ENCODE measurements at regions of chr1 and their contacts with region 1.

Region 1: DNA sequence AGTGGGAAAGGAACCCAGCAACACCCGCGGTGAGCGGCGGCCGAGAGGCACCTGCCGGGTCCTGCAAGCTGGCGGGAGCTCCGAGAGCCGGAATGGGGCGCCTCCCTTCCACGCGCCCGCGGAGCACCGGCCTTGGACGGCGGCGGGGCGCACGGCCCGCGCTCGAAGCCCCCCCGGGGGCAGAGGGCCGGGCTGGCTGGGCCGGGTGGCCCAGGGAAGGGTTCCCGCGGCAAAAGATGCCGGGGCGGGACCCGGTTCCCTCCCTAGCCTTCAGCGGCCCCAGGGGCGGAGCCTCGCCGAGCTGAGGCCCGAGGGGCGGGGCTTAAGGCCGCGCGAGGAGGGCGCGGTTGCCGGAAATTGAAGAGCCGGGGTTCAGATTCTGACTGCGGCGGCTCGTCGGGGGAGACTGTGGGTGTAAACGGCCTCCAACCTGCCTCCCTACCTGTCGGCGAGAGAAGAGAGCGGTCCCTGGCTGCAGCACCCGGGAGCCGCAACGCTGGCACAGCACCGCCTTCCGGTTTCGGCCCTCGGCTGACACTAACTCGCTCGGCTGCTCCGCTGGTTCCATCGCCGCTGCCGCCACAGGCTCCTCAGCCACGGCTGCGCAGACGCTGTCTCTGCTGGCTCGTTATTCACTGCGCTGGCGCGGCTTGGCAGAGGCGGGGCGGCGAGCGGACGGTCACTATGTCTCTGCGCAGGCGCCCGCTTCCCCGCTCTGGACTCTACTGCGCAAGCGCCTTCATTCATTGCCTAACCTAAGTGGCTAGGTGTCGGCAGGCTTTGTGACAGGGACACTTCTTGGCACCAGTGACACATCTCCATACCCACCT is at the start of gene RABIF:
- H3K4me3 Mint-ChIP-seq: peak within 1 kb of the TSS; percentile 77
- H3K27ac Mint-ChIP-seq: peak within 1 kb of the TSS; percentile 93
- H3K4me1 Mint-ChIP-seq: peaks cover 15% of the 10 kb centered on the region
- H3K27me3 Mint-ChIP-seq: no peaks in the 10 kb centered on the region

Region 2: DNA sequence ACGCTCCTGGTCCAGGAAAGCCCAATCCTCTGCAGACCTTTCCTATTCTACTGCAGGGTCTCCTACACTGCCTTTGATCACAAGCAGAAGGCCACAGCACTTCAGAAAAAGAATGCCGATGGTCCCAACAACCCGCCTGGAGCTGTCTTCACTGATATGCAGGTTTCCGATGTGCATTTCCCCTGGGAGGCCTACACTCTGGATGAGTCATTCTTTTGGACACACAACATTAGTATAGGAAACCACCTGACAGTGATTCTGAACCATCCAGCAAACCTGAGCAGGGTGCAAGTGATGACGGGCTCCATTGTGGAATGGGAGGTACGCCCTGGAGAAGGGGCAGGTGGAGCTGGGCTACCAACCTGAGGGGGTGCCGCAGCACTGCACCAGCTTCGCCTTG is 63.0 kb before region 1 on chr1:
- intact Hi-C with region 1: no loop called
- H3K4me3 Mint-ChIP-seq: no peak overlapping the region
- H3K27ac Mint-ChIP-seq: no peak overlapping the region
- H3K4me1 Mint-ChIP-seq: peaks cover 10% of the 10 kb centered on the region
- H3K27me3 Mint-ChIP-seq: peaks cover 3% of the 10 kb centered on the region

Region 3: DNA sequence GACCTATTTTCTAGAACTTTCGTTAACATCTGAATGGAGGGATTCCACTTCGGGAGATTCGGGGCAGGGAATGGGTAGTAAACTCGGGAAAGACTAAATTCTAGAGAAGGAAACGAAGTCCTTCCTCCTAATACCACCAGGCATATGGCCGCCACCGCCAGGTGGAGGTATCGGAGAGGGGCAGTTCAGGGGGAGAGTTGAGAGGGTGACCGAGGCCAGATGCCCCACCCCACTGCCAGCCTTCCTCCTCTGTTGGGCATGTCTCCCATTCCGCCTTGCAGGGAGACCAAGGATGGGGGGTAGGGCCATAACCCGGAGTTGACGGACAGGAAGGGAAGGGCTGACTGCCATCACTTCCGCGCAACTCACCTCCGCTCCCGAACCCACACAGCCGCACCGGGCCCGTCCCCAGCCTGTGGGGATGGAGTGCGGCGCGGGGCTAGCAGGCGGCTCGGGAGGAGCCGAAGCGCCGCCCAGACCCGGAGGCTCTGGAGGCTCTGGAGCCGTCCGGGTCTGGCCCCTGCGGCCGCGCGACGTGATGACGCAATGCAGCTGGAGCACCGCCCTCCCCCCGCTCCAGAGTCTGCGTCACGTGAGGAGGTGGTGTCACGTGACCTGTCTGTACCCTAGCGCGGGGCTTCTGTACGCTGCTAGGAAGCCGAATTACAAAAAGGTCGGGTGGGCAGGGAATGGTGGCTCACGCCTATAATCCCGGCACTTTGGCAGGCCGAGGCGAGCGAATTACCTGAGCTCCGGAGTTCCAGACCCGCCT is 38.2 kb after region 1 on chr1 and contains the start of gene KLHL12:
- intact Hi-C with region 1: loop called (anchors 5 kb)
- H3K4me3 Mint-ChIP-seq: peak within 1 kb of the TSS; percentile 91
- H3K27ac Mint-ChIP-seq: peak within 1 kb of the TSS; percentile 95
- H3K4me1 Mint-ChIP-seq: peaks cover 40% of the 10 kb centered on the region
- H3K27me3 Mint-ChIP-seq: peaks cover 3% of the 10 kb centered on the region

Region 4: DNA sequence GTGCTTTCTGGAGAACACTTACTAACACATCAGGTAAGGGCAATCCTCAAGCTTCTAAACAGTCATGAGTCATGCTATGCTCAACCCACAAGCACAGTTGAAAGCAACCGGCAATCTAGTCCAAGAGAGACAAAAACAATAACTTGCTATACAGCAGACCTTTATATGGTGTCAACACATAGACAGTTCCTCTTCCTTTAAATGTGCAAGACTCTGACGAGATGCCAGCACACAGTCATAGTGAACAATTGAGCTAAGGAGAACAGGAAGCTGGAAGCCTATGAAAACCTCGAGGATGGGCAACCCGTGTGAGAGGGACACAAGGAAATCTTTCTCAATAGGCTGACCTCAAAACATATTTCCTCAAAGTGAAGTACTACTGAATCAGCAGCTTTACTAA is 64.1 kb after region 1 on chr1:
- intact Hi-C with region 1: loop called (anchors 2 kb)
- H3K4me3 Mint-ChIP-seq: peak overlapping the region; percentile 59
- H3K27ac Mint-ChIP-seq: peak overlapping the region; percentile 85
- H3K4me1 Mint-ChIP-seq: peaks cover 57% of the 10 kb centered on the region
- H3K27me3 Mint-ChIP-seq: no peaks in the 10 kb centered on the region

Region 5: GRCh38 chr1:203006948-203007871 is 118.5 kb after region 1 on chr1 and contains the start of gene TMEM183A:
- intact Hi-C with region 1: loop called (anchors 2 kb)
- H3K4me3 Mint-ChIP-seq: peak within 1 kb of the TSS; percentile 85
- H3K27ac Mint-ChIP-seq: peak within 1 kb of the TSS; percentile 95
- H3K4me1 Mint-ChIP-seq: peaks cover 40% of the 10 kb centered on the region
- H3K27me3 Mint-ChIP-seq: no peaks in the 10 kb centered on the region

Measured in dendritic cell treated with granulocyte-macrophage colony-stimulating factor and Interleukin-4, amounts not matched to agents 40 ng/mL and 50 ng/mL, for 4 days (primary cell).